WTC11 (cell line): ENCODE measurements at regions of chr17 and their contacts with region 1.

Region 1: DNA sequence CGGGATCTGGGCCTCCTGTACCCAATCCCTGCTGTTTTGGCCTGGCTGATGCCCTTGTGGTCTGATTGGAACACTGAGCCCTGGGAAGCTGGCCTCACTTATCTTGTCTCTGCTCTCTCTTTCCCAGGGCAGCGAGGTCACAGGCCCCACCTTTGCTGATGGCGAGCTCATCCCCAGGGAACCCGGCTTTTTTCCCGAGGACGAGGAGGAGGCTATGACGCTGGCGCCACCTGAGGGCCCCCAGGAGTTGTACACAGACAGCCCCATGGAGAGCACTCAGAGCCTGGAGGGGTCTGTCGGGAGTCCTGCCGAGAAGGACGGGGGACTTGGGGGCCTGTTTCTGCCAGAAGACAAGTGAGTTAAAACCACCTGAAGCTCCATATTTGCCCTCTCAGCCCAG is 126.0 kb downstream of the RAB11FIP4 start:
- DNase-seq: peak; percentile 68
- ATAC-seq: peak; percentile 82
- H3K4me3 Mint-ChIP-seq: no peak overlapping the region
- H3K27ac Mint-ChIP-seq: 0 out of 2 replicates have a peak overlapping the region, but pooled peaks have one; percentile 45
- H3K4me1 Mint-ChIP-seq: peaks cover 11% of the 10 kb centered on the region; the same call in 1 of the 2 replicates
- H3K27me3 Mint-ChIP-seq: no peaks in the 10 kb centered on the region
- CTCF ChIP-seq: 0 out of 2 replicates have a peak, but pooled peaks have one; percentile 14

Region 2: GRCh38 chr17:31327534-31328159 is 189.9 kb before region 1 on chr17:
- CTCF ChIA-PET with region 1: no interaction called
- POLR2A ChIA-PET with region 1: no interaction called
- DNase-seq: no peak
- ATAC-seq: no peak
- H3K4me3 Mint-ChIP-seq: no peak overlapping the region
- H3K27ac Mint-ChIP-seq: no peak overlapping the region; the same call in 1 of the 2 replicates
- H3K4me1 Mint-ChIP-seq: no peaks in the 10 kb centered on the region
- H3K27me3 Mint-ChIP-seq: no peaks in the 10 kb centered on the region
- CTCF ChIP-seq: no peak

Region 3: DNA sequence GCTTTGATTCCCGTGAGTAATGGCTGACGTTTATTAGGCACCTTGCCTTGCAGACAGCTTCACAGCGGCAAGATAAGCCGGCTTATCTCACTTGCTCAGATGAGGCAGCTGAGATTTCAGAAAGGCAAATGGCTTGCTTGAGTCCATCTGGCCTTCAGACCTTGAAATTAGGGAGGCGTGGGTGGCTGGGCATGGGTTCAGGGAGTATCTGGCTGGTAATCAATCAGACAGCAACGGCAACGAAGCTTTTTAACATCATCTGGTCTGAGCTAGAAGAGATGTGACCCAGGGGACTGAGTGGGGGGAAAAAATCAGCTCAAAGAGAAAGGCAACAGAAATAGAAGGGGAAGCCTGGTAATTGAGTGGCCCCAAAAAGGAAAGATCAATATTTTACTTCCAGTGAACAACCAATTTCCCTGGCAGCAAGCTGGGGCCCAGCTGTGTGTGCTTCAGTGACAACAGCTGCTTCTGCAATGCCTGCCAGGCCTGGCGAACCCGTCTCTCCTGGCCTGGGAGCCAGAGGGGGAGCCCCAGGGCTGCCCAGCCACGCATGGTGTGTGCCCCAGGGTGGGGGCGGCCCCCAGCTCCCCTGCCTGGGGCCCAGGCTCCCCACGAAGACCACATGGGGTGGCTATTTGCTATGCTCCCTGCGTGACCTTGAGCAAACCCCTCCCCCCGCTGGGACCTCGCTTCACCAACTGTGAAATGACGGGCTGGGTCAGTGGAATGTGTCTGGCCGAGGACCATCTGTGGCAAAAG is 92.1 kb before region 1 on chr17:
- CTCF ChIA-PET with region 1: interaction called, 10 read pairs
- POLR2A ChIA-PET with region 1: no interaction called
- DNase-seq: no peak
- ATAC-seq: peak; percentile 72
- H3K4me3 Mint-ChIP-seq: no peak overlapping the region
- H3K27ac Mint-ChIP-seq: peak overlapping the region; percentile 55
- H3K4me1 Mint-ChIP-seq: peaks cover 12% of the 10 kb centered on the region
- H3K27me3 Mint-ChIP-seq: no peaks in the 10 kb centered on the region; the same call in 1 of the 2 replicates
- CTCF ChIP-seq: no peak

Region 4: DNA sequence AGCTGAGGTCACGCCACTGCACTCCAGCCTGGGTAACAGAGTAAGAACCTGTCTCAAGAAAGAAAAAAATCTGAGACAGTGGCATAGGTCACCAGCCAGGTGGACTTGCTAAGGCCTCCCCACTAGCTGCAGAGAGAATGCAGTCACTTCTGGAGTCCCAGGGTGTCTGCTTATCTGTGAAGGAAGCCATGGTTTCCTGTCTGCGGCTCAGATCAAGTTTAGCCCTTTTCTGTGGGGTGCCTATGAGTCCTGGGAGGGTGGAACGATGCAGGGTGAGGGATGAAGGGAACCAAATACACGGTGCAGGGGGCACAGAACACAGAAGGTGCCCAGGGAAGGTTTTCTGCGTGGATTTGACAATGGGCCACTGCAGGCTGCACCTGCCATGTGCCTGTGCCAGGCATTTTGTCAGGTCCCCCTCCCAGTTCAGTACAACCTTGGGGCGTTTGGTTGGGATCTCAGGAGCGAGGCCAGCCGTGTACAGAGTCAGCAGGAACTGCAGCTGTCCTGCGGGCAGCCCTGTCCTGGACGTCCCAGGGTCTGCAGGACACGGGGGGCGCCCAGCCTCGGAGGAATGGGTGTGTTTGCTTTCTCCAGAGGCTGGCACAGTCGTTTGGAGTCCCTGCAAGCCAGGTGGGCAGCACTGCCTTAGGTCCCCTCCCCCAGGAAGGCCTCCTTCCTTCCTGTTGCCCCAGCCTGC is 84.3 kb before region 1 on chr17:
- CTCF ChIA-PET with region 1: interaction called, 50 read pairs
- POLR2A ChIA-PET with region 1: interaction called, 4 read pairs
- DNase-seq: no peak
- ATAC-seq: no peak
- H3K4me3 Mint-ChIP-seq: no peak overlapping the region
- H3K27ac Mint-ChIP-seq: no peak overlapping the region
- H3K4me1 Mint-ChIP-seq: peaks cover 13% of the 10 kb centered on the region
- H3K27me3 Mint-ChIP-seq: no peaks in the 10 kb centered on the region; the same call in 1 of the 2 replicates
- CTCF ChIP-seq: no peak

Region 5: GRCh38 chr17:31467502-31468256 is 49.8 kb before region 1 on chr17:
- CTCF ChIA-PET with region 1: interaction called, 16 read pairs
- POLR2A ChIA-PET with region 1: no interaction called
- DNase-seq: peak; percentile 34
- ATAC-seq: peak; percentile 15
- H3K4me3 Mint-ChIP-seq: no peak overlapping the region
- H3K27ac Mint-ChIP-seq: peak overlapping the region; percentile 90
- H3K4me1 Mint-ChIP-seq: peaks cover 49% of the 10 kb centered on the region
- H3K27me3 Mint-ChIP-seq: no peaks in the 10 kb centered on the region; the same call in 1 of the 2 replicates
- CTCF ChIP-seq: no peak

Region 6: DNA sequence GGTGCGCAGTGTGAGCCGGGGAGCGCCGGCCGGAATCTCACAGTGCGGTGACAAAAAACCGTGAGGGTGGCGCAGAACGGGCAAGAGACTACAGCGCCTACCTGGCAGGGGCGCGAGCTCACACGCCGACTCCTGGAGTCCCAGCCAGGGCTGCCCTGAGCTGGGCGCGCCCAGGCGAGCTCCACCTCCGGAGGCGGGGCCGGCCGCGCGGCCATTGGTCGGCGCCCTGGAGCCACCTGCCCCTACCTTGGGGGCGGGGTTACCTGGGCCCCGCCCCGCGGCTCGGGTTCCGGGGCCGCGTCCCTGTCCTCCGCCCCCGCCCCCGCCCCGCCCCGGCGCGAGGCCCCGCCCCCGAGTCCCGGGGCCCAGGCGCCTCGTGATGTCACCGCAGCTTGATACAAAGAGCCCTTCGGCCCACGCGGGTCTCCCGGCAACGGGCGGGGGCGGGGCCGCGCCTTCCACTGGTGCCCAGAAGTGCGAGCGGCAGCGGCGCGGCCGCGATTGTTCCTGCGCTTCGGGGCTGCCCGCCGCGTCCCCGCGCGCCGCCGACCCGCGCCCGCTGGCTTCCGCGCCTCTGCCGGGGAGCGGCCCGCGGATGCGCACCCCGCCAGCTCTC is 29.8 kb before region 1 on chr17:
- CTCF ChIA-PET with region 1: interaction called, 25 read pairs
- POLR2A ChIA-PET with region 1: interaction called, 4 read pairs
- DNase-seq: peak; percentile 96
- ATAC-seq: peak; percentile 90
- H3K4me3 Mint-ChIP-seq: peak overlapping the region; percentile 83
- H3K27ac Mint-ChIP-seq: peak overlapping the region; percentile 89
- H3K4me1 Mint-ChIP-seq: peaks cover 40% of the 10 kb centered on the region
- H3K27me3 Mint-ChIP-seq: no peaks in the 10 kb centered on the region; the same call in 1 of the 2 replicates
- CTCF ChIP-seq: no peak

Region 7: GRCh38 chr17:31499771-31500554 is 17.6 kb before region 1 on chr17:
- CTCF ChIA-PET with region 1: interaction called, 11 read pairs
- POLR2A ChIA-PET with region 1: interaction called, 4 read pairs
- DNase-seq: no peak
- ATAC-seq: peak; percentile 67
- H3K4me3 Mint-ChIP-seq: no peak overlapping the region
- H3K27ac Mint-ChIP-seq: peak overlapping the region; percentile 79
- H3K4me1 Mint-ChIP-seq: peaks cover 62% of the 10 kb centered on the region
- H3K27me3 Mint-ChIP-seq: no peaks in the 10 kb centered on the region
- CTCF ChIP-seq: no peak

Region 8: GRCh38 chr17:31533546-31534155 is 16.1 kb after region 1 on chr17:
- CTCF ChIA-PET with region 1: interaction called, 14 read pairs
- POLR2A ChIA-PET with region 1: interaction called, 3 read pairs
- DNase-seq: peak; percentile 72
- ATAC-seq: peak; percentile 74
- H3K4me3 Mint-ChIP-seq: no peak overlapping the region
- H3K27ac Mint-ChIP-seq: no peak overlapping the region
- H3K4me1 Mint-ChIP-seq: peaks cover 3% of the 10 kb centered on the region; the same call in 1 of the 2 replicates
- H3K27me3 Mint-ChIP-seq: no peaks in the 10 kb centered on the region
- CTCF ChIP-seq: 0 out of 2 replicates have a peak, but pooled peaks have one; percentile 36